ENCODE measurements at regions of chrX and their contacts with region 1.

Region 1: DNA sequence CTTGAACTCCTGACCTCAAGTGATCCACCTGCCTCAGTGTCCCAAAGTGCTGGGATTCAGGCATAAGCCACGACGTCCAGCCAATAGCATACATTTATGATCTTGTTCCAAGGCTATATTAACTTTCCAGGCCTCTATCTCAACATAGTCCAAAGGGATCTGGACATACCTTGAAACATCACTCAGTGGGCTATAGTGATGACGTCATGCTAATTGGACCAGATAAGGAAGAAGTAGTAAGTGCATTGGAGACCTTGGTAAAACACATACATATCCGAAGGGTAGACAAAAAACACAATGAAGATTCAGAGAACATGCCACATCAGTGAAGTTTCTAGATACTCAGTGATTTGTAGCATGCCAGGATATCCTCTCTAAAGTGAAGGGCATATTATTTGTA is 37.4 kb upstream of the USP26 start:
- DNase-seq: no peak
- H3K4me3 ChIP-seq: no peak overlapping the region
- CTCF ChIP-seq: no peak
- POLR2A ChIP-seq: no peak

Region 2: GRCh38 chrX:132561485-132561884 is 572.8 kb before region 1 on chrX:
- intact Hi-C with region 1: no loop called
- DNase-seq: no peak
- H3K4me3 ChIP-seq: no peak overlapping the region
- CTCF ChIP-seq: no peak
- POLR2A ChIP-seq: no peak

Region 3: DNA sequence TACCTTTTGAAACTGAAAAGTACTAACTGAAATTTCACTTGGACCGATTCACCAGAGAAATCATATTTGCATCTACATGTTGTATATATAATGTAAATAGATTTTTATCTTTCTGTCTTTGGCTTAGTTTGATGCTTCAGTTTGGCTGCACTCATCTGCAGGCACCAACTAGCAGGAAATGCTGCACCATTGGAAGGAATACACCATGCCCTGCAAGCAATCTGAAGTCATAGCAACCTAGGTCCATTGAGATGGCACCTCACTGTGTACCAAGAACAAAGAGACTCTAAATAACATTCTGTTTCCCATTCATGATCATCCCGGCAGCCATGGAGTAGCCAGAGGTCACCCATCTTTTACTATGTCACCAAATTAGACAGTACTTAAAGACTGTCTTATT is 135.1 kb before region 1 on chrX:
- intact Hi-C with region 1: no loop called
- DNase-seq: no peak
- H3K4me3 ChIP-seq: no peak overlapping the region
- CTCF ChIP-seq: no peak
- POLR2A ChIP-seq: no peak

Region 4: DNA sequence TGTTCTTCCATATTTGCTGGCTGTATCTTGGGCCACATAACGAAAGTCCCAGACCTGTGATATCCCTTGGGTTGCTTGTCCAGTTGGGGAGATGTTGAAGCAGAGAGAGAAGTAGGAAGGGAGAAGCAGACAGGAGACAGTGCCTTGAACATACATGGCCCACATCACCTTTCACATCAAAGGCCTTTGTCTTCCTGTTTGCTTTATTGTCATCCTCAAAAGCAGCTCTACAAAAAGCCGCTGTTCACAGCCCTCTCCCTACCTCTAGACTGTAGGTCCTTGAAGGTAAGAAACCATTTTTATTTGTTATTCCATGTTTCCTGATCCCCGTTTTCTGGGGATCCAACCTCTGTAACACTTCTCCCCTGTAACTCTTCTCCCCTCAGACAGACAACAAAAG is 52.3 kb before region 1 on chrX:
- intact Hi-C with region 1: loop called (anchors 5 kb)
- DNase-seq: no peak
- H3K4me3 ChIP-seq: no peak overlapping the region
- CTCF ChIP-seq: no peak
- POLR2A ChIP-seq: no peak